HCT116 (cell line): ENCODE measurements at regions of chr22 and their contacts with region 1.

Region 1: DNA sequence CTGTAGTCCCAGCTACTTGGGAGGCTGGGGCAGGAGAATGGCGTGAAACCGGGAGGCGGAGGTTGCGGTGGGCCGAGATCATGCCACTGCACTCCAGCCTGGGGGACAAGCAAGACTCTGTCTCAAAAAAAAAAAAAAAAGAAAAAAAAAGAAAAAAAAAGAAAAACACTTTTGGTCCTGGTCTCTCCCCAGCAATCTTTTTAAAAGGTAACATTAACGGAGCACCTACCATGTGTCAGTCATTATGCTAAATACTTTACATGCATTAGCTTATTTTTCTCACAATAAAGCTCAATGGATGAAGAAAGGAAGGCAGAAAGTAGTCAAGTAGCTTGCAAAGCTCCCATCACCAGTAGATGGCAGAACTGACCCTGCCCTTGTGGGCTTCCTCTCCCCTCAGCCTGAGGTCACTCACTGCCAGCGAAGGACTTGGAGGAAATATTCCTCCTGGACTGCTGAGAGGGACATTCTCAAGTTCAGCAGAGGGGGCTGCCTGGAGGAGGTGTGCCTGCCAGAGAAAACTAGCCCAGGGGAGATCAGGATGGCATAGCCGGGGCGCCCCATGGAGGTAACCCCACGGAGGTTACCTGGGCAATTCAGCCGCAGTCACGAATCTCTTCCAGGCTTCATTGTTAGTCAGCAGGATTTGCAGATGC is 15.5 kb downstream of the APOL3 start:
- DNase-seq: peak; percentile 13
- ATAC-seq: peak; percentile 94
- H3K4me3 ChIP-seq: no peak overlapping the region
- H3K27ac ChIP-seq: no peak overlapping the region
- H3K4me1 ChIP-seq: no peaks in the 10 kb centered on the region
- H3K27me3 ChIP-seq: peaks cover 14% of the 10 kb centered on the region; the same call in 1 of the 2 replicates
- CTCF ChIP-seq: peak; percentile 72 to 80 (median 78); a peak in 5 of 6 replicates
- POLR2A ChIP-seq: no peak
- RAD21 ChIP-seq: peak; percentile 80

Region 2: GRCh38 chr22:36180038-36180880 is 35.2 kb after region 1 on chr22:
- CTCF ChIA-PET with region 1: interaction called, 13 read pairs
- POLR2A ChIA-PET with region 1: no interaction called
- RAD21 ChIA-PET with region 1: interaction called in 1 of 2 experiments, 5 read pairs
- intact Hi-C with region 1: loop called (anchors 1 kb)
- DNase-seq: peak; percentile 42
- ATAC-seq: peak; percentile 98
- H3K4me3 ChIP-seq: no peak overlapping the region
- H3K27ac ChIP-seq: no peak overlapping the region
- H3K4me1 ChIP-seq: no peaks in the 10 kb centered on the region
- H3K27me3 ChIP-seq: peaks cover 3% of the 10 kb centered on the region; the same call in 1 of the 2 replicates
- CTCF ChIP-seq: peak; percentile 66 to 89 (median 87); a peak in 5 of 6 replicates
- POLR2A ChIP-seq: no peak
- RAD21 ChIP-seq: peak; percentile 54

Region 3: DNA sequence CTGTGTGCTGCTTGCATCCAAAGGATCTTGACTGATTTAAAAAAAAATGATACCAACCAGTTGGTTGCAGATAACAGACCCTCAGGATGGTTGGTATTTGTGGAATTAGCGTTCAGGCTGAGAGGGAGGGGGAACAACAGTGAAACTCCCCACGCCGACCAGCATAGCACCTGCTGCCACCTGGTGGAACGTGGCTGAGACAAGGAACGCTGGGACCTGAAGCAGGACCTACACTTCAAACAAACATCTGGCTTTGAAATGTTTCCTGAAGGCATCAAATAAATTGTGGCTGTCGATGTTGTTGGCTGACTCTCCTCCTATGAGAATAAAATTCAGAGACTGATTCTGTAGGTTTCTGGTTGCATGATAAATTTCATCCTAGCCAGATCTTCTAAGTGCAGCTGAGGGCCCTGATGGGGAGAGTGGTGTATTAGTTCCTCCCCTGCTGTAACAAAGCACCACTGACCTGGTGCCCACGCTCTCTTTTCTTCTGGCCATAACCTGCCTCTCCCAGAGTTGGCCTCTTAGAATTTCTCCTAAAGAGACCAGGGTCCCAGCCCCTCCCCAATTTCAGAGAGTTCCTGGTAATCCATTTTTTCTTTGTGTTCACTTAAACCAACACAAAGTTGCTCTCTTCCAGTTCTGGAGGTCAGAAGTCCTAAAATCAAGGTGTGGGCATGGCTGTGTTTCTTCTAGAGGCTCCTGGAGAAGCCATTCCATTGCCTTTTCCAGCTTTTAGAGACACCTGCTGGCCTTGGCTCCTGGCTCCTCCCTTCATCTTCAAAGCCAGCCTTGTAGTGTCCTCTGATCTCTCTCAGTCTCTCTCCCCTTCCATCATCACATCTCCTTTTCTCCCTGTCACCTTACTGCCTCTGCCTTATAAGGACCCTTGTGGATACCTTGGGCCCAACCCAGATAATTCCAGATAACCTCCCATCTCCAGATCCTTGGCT is 77.1 kb after region 1 on chr22:
- CTCF ChIA-PET with region 1: no interaction called
- POLR2A ChIA-PET with region 1: no interaction called
- RAD21 ChIA-PET with region 1: no interaction called
- intact Hi-C with region 1: loop called (anchors 10 kb)
- DNase-seq: peak; percentile 32
- ATAC-seq: peak; percentile 97
- H3K4me3 ChIP-seq: no peak overlapping the region
- H3K27ac ChIP-seq: no peak overlapping the region
- H3K4me1 ChIP-seq: no peaks in the 10 kb centered on the region
- H3K27me3 ChIP-seq: peaks cover 11% of the 10 kb centered on the region; the same call in 1 of the 2 replicates
- CTCF ChIP-seq: peak; percentile 66 to 89 (median 87); a peak in 5 of 6 replicates
- POLR2A ChIP-seq: no peak
- RAD21 ChIP-seq: peak; percentile 59

Region 4: GRCh38 chr22:36277482-36278291 is 132.7 kb after region 1 on chr22:
- CTCF ChIA-PET with region 1: interaction called, 6 read pairs
- POLR2A ChIA-PET with region 1: no interaction called
- RAD21 ChIA-PET with region 1: no interaction called
- intact Hi-C with region 1: loop called (anchors 5 kb)
- DNase-seq: peak; percentile 40
- ATAC-seq: peak; percentile 93
- H3K4me3 ChIP-seq: no peak overlapping the region
- H3K27ac ChIP-seq: no peak overlapping the region
- H3K4me1 ChIP-seq: peaks cover 0 to 8% of the 10 kb centered on the region in 2 experiments; a peak in 2 of 4 replicates
- H3K27me3 ChIP-seq: no peaks in the 10 kb centered on the region; the same call in 1 of the 2 replicates
- CTCF ChIP-seq: peak; percentile 47 to 81 (median 69); a peak in 5 of 6 replicates
- POLR2A ChIP-seq: no peak
- RAD21 ChIP-seq: peak; percentile 48